ENCODE measurements at regions of chr2 and their contacts with region 1.

Region 1: DNA sequence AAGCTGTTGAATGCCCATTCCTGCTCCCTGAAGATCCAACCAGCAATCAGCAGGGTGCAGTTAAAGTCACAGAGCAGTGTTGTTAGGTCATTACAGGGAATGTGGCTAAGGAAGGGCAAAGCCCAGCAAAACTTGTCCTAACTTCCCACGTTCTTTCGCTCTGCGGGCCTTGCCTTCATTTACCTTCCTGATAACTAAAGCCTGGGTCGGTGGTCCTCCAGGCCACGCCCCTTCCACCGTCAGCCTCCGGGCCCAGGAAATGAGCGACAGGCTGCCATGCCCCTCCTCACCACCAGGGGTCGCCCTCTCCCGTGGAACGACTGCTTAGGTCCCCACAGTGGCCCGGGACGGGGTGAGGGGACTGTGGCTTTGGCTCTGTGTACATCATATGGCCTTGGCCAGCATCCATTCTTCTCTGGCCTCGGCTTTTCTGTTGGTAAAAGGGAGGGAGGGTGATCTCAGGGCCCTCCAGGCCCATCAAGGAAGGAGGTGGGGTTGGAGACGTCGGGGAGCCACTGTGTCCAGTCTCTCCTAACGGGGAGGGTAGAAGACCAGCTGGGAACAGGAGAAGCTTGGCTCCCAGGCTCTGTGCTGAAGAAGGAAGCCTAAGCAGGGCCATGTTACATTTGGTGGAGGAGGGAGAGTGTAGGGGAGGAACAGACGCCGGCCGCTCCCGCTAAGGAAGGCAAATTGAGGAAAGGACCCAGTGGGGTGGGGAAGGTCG is 2.2 kb downstream of the SH2D6 start:
- DNase-seq: peak; percentile 79
- H3K4me3 ChIP-seq: no peak overlapping the region
- H3K27ac ChIP-seq: peak overlapping the region; percentile 16
- H3K4me1 ChIP-seq: peaks cover 9% of the 10 kb centered on the region
- H3K27me3 ChIP-seq: no peaks in the 10 kb centered on the region
- CTCF ChIP-seq: peak; percentile 99
- POLR2A ChIP-seq: no peak

Region 2: GRCh38 chr2:85354286-85355072 is 66.2 kb before region 1 on chr2 and contains the starts of genes ELMOD3 and RETSAT:
- CTCF ChIA-PET with region 1: interaction called, 5 read pairs
- POLR2A ChIA-PET with region 1: interaction called, 4 read pairs
- dilution Hi-C with region 1: no loop called
- intact Hi-C with region 1: loop called (anchors 1 kb)
- DNase-seq: peak; percentile 99
- H3K4me3 ChIP-seq: peak within 1 kb of the TSS; percentile 78 to 97 (median 87)
- H3K27ac ChIP-seq: peak within 1 kb of the TSS; percentile 44
- H3K4me1 ChIP-seq: peaks cover 8% of the 10 kb centered on the region
- H3K27me3 ChIP-seq: no peaks in the 10 kb centered on the region
- CTCF ChIP-seq: no peak
- POLR2A ChIP-seq: peak; percentile 98
- total RNA-seq, gene ELMOD3: 12.3 and 18.5 TPM in 2 replicates
- total RNA-seq, gene RETSAT: 49.9 and 59.1 TPM in 2 replicates

Region 3: DNA sequence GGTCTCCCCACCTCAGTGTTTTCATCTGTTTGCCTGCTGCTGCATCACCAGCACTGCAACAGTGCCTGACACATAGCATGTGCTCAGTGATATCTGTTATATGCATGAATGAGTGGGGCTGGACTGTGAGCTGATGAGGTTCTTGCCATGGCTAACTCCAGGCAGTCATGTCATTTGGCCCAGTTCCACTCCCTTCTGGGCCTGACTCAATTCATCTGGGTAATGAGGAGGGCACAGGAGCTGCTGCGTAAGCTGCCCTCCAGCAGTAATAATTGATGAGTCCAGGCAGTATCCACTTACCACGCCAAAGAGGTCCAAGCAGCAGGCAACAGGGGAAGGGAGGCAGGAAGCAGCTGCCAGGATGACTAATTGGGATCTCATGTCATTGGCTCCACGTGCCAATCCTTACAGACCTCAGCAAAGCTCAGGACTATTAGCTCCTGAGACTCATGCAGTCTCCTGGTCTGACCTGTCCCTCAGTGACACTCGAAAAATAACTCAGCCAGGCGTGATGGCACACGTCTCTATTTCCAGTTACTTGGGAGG is 84.2 kb after region 1 on chr2:
- CTCF ChIA-PET with region 1: interaction called, 7 read pairs
- POLR2A ChIA-PET with region 1: interaction called, 8 read pairs
- dilution Hi-C with region 1: no loop called
- intact Hi-C with region 1: loop called (anchors 1 kb)
- DNase-seq: peak; percentile 96
- H3K4me3 ChIP-seq: no peak overlapping the region
- H3K27ac ChIP-seq: peak overlapping the region; percentile 39
- H3K4me1 ChIP-seq: peaks cover 41% of the 10 kb centered on the region
- H3K27me3 ChIP-seq: no peaks in the 10 kb centered on the region
- CTCF ChIP-seq: no peak
- POLR2A ChIP-seq: peak; percentile 32

Region 4: GRCh38 chr2:85602476-85603234 is 182.0 kb after region 1 on chr2 and contains the start of gene TMEM150A:
- CTCF ChIA-PET with region 1: no interaction called
- POLR2A ChIA-PET with region 1: no interaction called
- dilution Hi-C with region 1: no loop called
- intact Hi-C with region 1: loop called (anchors 5 kb)
- DNase-seq: peak; percentile 88
- H3K4me3 ChIP-seq: peak within 1 kb of the TSS; percentile 64 to 98 (median 65)
- H3K27ac ChIP-seq: peak within 1 kb of the TSS; percentile 23
- H3K4me1 ChIP-seq: peaks cover 24% of the 10 kb centered on the region
- H3K27me3 ChIP-seq: no peaks in the 10 kb centered on the region
- CTCF ChIP-seq: peak; percentile 32 to 51
- POLR2A ChIP-seq: peak; percentile 87
- total RNA-seq, gene TMEM150A: 14.6 and 17.7 TPM in 2 replicates

Region 5: DNA sequence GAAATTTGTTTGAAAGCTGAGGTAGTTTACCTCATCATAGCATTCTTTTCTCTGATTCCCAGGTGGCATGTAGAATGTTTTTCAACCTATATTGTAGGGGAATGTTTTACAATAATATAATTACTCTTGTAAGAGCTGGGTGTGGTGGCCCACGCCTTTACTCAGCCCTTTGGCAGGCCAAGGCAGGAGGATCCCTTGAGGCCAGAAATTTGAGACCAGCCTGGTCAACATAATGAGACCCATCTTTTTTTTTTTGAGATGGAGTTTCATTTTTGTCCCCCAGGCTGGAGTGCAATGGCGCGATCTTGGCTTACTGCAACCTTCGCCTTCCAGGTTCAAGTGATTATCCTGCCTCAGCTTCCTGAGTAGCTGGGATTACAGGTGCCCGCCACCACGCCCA is 198.9 kb after region 1 on chr2:
- CTCF ChIA-PET with region 1: no interaction called
- POLR2A ChIA-PET with region 1: no interaction called
- dilution Hi-C with region 1: no loop called
- intact Hi-C with region 1: loop called (anchors 5 kb)
- DNase-seq: no peak
- H3K4me3 ChIP-seq: no peak overlapping the region
- H3K27ac ChIP-seq: no peak overlapping the region
- H3K4me1 ChIP-seq: peaks cover 9% of the 10 kb centered on the region
- H3K27me3 ChIP-seq: no peaks in the 10 kb centered on the region
- CTCF ChIP-seq: no peak
- POLR2A ChIP-seq: no peak

Measured in endothelial cell of umbilical vein (primary cell).